Head of caudate nucleus (tissue), 42 donors: ENCODE measurements at regions of chr12 and their contacts with region 1.

Region 1: DNA sequence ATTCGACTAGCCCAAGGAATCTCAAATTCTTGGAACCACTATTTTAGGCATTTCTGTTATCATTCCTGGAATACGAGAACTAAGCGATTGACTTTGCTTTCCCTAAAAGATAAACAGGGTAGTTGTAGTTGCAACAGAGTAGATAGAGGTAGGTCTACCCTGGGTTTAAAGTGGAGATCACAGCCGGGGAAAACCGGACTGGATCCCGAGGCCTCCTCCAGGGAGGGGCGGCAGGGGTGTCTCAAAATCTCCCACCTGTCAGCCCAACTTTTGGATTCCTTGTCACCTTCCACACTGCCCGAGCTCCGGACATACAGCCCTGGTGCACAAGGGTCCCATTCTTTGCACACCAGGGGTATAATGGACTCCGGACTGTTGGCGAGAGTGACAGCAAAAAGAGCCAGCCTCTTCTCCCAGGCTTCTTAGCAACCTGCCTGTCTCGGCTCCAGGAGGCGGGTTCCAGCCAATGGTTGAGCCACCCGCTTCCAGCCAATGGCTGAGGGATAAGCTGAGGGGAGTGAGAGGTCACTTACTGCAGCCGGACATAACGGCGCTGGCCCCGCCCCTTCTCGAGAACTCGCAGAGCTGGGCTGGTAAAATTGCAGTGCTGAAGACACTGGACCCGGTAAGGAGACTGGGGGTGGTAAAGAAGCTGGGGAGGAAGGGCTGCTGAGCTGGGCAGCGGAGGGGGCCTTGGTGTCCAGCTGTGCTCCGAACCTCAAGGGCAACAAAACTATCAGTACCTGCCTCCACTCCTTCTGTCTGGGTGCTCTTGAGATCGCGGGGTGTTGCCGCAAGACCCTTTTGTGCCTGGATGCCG is at the start of gene SUOX:
- DNase-seq: peak; percentile 89 to 99 (median 98)

Region 2: GRCh38 chr12:56041552-56042429 is 44.9 kb after region 1 on chr12 and contains the start of gene RPS26:
- intact Hi-C with region 1: loop called (anchors 5 kb)
- DNase-seq: peak; percentile 83 to 97 (median 93)